ENCODE measurements at regions of chr3 and their contacts with region 1.

Region 1: GRCh38 chr3:28286595-28286994 is 45.2 kb downstream of the CMC1 start:
- DNase-seq: no peak
- H3K4me3 ChIP-seq: no peak overlapping the region
- H3K27ac ChIP-seq: no peak overlapping the region
- H3K4me1 ChIP-seq: no peaks in the 10 kb centered on the region
- H3K27me3 ChIP-seq: no peaks in the 10 kb centered on the region
- CTCF ChIP-seq: peak; percentile 46

Region 2: DNA sequence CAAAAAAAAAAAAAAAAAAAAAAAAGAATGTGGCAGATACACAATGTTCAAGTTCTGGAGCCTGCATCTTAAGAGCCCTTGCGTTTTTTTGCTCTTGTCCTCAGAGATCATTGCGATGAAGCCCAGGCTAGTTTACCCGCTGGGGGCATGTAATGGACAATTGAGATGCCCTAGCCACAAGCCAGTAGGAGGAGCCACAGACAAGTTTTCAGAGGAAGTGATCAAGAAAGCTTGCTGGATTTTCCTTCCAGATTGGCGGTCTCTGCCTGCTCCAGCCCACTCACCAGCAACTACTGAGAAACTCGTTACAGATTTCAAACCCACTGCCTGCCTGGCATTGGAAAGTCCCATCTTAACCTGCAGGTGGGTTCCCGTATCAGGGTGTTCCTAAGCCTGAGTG is 372.4 kb before region 1 on chr3:
- intact Hi-C with region 1: loop called (anchors 10 kb)
- DNase-seq: no peak
- H3K4me3 ChIP-seq: no peak overlapping the region
- H3K27ac ChIP-seq: no peak overlapping the region
- H3K4me1 ChIP-seq: no peaks in the 10 kb centered on the region
- H3K27me3 ChIP-seq: no peaks in the 10 kb centered on the region
- CTCF ChIP-seq: no peak

Region 3: DNA sequence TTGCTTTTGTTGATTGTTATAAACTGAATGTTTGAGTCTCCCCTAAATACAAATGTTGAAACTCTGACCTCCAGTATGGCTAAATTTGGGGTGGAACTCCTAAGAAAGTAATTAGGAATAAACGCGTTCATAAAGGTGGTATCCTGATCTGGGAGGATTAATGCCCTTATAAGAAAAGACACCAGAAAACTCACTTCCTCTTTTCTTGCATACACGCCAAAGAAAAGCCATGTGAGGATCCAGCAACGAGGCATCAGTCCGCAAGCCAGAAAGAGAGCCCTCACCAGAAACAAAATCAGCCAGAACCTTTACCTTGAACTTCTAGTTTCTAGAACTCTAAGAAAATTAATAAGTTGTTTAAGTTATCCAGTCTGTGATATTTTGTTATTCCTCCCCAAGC is 99.5 kb after region 1 on chr3:
- intact Hi-C with region 1: no loop called
- DNase-seq: no peak
- H3K4me3 ChIP-seq: no peak overlapping the region
- H3K27ac ChIP-seq: no peak overlapping the region
- H3K4me1 ChIP-seq: no peaks in the 10 kb centered on the region
- H3K27me3 ChIP-seq: no peaks in the 10 kb centered on the region
- CTCF ChIP-seq: no peak

Measured in colonic mucosa (tissue), 4 donors.